Motor neuron (in vitro differentiated cells): ENCODE measurements at regions of chrX and their contacts with region 1.

Region 1: DNA sequence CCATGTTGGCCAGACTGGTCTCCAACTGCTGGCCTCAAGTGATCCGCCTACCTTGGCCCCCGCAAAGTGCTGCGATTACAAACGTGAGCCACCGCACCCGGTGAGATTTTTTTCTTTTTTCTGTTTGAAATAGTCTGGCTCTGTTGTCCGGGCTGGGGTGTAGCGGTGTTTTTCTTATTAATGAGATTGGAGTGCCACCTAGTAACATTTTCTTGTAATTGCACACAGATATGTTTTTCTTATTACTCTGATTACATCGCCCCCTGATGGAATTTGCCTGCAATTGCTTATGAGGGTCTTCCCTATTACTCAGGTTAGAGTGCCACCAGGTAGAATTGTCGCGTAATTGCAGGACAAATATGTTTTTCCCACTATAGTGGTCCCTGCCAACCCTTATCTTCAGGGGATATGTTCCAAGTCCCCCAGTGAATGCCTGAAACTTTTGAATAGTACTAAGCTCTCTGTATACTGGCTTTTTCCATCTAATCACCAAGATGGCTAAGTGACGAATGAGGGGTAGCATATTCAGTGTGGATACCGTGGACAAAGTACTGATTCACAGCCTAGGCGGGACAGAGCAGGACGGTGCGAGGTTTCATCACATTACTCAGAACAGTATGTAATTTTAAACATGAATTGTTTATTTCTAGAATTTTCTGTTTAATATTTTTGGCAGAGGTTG is 8.6 kb upstream of the PDHA1 start:
- ATAC-seq: no peak
- H3K4me3 ChIP-seq: no peak overlapping the region
- H3K27ac ChIP-seq: no peak overlapping the region
- H3K4me1 ChIP-seq: no peaks in the 10 kb centered on the region

Region 2: GRCh38 chrX:18390941-18391538 is 944.0 kb before region 1 on chrX:
- in situ Hi-C with region 1: loop called in 7 of 9 experiments (anchors 10 to 25 kb)
- ATAC-seq: no peak
- H3K4me3 ChIP-seq: no peak overlapping the region
- H3K27ac ChIP-seq: no peak overlapping the region
- H3K4me1 ChIP-seq: no peaks in the 10 kb centered on the region

Region 3: DNA sequence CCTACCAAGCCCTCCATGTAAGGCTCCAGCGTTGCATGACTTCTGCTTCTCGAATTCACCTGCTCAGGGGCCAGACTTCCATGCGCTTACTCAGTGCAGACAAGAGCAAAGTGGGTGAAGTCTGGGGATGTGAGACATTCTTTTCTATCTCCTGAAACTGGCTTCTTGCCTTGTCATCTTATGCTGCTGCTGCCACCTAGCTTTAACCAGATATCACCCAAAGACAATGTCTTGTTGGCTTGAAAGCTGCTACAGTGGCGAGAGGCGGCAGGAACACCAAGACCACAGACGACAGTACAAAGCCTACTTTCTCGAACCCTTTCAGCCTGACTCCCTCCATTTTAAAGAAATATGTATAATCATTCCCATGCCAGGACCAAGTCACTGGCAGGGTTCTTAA is 109.2 kb before region 1 on chrX:
- in situ Hi-C with region 1: no loop called
- ATAC-seq: peak in 5 of 8 experiments; percentile 35 to 51 (median 44)
- H3K4me3 ChIP-seq: no peak overlapping the region
- H3K27ac ChIP-seq: no peak overlapping the region
- H3K4me1 ChIP-seq: no peaks in the 10 kb centered on the region